ENCODE measurements at regions of chr5 and their contacts with region 1.

Region 1: DNA sequence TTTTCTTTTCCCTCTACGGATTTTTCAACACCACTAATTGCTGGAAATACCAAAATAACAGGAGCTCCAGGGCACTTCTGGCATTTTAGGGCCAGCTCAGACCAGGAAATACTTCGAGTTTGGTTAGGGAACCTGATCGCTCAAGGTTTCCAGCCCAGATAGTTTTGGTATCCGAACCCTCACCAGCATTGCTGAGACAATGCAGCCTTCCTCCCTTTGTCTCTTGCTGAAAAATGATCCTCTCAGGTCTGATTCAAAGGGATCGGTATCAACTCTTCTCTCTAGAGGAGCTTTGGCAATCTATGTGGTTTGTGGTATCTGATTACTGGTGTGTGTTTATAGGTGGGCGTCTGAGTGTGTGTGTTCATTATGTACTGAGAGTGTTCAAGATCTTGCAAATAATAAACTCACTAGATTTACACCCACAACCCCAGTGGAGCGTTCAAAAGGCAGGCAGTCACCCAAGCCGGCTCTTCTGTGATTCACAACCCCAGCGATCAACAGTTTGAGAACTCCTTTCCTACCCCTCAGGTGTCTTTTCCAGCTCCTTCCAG is 122.8 kb upstream of the EGFLAM start:
- DNase-seq: no peak
- ATAC-seq: no peak
- H3K4me3 ChIP-seq: no peak overlapping the region
- H3K27ac ChIP-seq: no peak overlapping the region
- H3K4me1 ChIP-seq: no peaks in the 10 kb centered on the region
- H3K27me3 ChIP-seq: peaks cover 6% of the 10 kb centered on the region; the same call in 1 of the 2 replicates
- CTCF ChIP-seq: no peak

Region 2: GRCh38 chr5:37037840-37038239 is 1097.7 kb before region 1 on chr5:
- CTCF ChIA-PET with region 1: no interaction called
- POLR2A ChIA-PET with region 1: interaction called, 11 read pairs
- in situ Hi-C with region 1: no loop called
- intact Hi-C with region 1: no loop called
- DNase-seq: no peak
- ATAC-seq: no peak
- H3K4me3 ChIP-seq: no peak overlapping the region
- H3K27ac ChIP-seq: no peak overlapping the region
- H3K4me1 ChIP-seq: no peaks in the 10 kb centered on the region
- H3K27me3 ChIP-seq: no peaks in the 10 kb centered on the region
- CTCF ChIP-seq: no peak

Region 3: DNA sequence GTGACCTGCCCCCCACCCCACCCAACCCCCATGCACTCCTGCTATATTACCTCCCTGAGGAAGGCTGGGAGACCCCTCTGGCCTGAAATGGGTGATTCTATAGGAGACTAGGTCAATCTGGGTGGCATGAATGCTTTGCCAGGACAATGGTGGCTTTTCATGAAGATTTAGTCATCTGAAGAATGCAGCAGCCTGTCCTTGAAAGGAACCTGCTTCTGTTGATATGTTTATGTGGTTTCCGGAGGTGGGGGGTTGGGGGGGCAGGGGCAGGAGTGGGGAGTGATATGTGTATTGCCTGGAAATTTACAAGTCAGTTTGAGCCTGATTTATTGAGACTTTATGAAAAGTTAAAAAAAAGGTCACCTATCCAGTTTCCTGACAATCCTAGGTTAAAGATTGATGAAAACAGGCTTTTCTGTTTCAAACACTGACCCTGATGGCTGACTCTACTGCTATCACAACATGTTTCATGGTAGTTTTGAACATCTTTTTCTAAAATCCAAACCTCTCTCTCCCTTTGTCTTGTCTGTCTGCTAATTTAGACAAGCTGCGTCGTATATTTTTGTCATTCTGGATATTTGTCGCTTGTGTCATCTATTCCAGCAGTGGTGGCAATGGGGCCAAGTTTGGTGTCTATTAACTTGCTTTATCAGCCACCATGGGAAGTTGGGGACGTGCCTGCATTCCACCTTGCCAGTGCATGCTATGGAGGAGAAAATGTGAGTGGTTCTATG is 30.9 kb before region 1 on chr5:
- CTCF ChIA-PET with region 1: no interaction called
- POLR2A ChIA-PET with region 1: no interaction called
- in situ Hi-C with region 1: no loop called
- intact Hi-C with region 1: loop called (anchors 1 kb)
- DNase-seq: no peak
- ATAC-seq: no peak
- H3K4me3 ChIP-seq: no peak overlapping the region
- H3K27ac ChIP-seq: no peak overlapping the region
- H3K4me1 ChIP-seq: no peaks in the 10 kb centered on the region
- H3K27me3 ChIP-seq: no peaks in the 10 kb centered on the region
- CTCF ChIP-seq: no peak

Region 4: DNA sequence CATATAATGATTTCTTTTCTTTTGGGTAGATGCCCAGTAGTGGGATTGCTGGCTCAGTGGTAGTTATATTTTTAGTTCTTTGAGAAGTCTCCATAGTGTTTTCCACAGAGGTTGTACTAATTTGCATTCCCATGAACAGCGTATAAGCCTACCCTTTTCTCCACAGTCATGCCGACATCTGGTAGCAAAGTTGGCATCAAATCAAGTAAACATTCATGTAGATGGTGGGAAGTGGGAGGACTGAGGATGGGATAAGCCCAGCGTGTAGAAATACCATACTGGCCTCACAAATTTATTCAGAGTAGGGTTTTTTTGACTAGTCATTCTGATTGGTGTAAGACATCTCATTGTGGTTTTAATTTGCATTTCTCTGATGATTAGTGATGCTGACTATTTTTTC is 238.2 kb after region 1 on chr5:
- CTCF ChIA-PET with region 1: no interaction called
- POLR2A ChIA-PET with region 1: no interaction called
- in situ Hi-C with region 1: no loop called
- intact Hi-C with region 1: no loop called
- DNase-seq: no peak
- ATAC-seq: no peak
- H3K4me3 ChIP-seq: no peak overlapping the region
- H3K27ac ChIP-seq: no peak overlapping the region
- H3K4me1 ChIP-seq: no peaks in the 10 kb centered on the region
- H3K27me3 ChIP-seq: peaks cover 12% of the 10 kb centered on the region
- CTCF ChIP-seq: no peak